ENCODE measurements at regions of chr10 and their contacts with region 1.

Region 1: GRCh38 chr10:122435212-122435827 is 19.1 kb upstream of the ARMS2 start:
- DNase-seq: peak; percentile 64
- H3K4me3 ChIP-seq: no peak overlapping the region
- H3K27ac ChIP-seq: no peak overlapping the region
- H3K4me1 ChIP-seq: no peaks in the 10 kb centered on the region
- H3K27me3 ChIP-seq: no peaks in the 10 kb centered on the region
- CTCF ChIP-seq: peak; percentile 72

Region 2: DNA sequence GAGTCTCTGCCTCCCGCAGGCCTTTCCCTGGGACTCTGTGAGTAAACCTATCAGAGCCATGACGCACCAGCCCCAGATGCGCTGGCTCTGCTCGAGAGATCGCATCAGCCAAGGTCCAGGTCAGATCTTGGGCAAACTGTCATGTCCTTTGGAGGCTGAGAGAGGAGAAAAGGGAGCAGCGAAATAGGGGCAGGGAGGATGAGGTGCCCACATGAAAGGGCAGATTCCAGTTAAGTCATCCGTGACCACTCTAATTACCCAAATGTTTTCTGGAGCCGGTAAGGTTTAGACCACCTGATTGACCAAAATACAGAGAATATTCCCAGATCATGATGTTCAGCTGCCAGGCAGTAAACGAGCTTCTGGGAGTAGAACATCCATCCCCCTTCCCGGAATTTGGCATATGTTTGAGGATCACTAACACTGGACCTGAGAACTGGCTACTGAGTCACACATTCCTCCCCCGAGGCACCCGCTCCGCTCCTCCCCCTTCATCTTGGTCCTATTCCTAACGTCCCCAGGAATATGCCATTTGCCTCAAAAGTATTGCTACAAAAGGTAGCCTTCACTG is 925.0 kb before region 1 on chr10:
- CTCF ChIA-PET with region 1: no interaction called
- POLR2A ChIA-PET with region 1: no interaction called
- intact Hi-C with region 1: no loop called
- DNase-seq: no peak
- H3K4me3 ChIP-seq: no peak overlapping the region
- H3K27ac ChIP-seq: no peak overlapping the region
- H3K4me1 ChIP-seq: no peaks in the 10 kb centered on the region
- H3K27me3 ChIP-seq: peaks cover 12% of the 10 kb centered on the region
- CTCF ChIP-seq: no peak

Region 3: GRCh38 chr10:122298598-122299301 is 136.6 kb before region 1 on chr10:
- CTCF ChIA-PET with region 1: interaction called, 15 read pairs
- POLR2A ChIA-PET with region 1: no interaction called
- intact Hi-C with region 1: loop called (anchors 1 kb)
- DNase-seq: peak; percentile 79
- H3K4me3 ChIP-seq: no peak overlapping the region
- H3K27ac ChIP-seq: no peak overlapping the region
- H3K4me1 ChIP-seq: no peaks in the 10 kb centered on the region
- H3K27me3 ChIP-seq: no peaks in the 10 kb centered on the region
- CTCF ChIP-seq: peak; percentile 86

Region 4: GRCh38 chr10:122342293-122343134 is 92.8 kb before region 1 on chr10:
- CTCF ChIA-PET with region 1: interaction called, 3 read pairs
- POLR2A ChIA-PET with region 1: no interaction called
- intact Hi-C with region 1: loop called (anchors 2 kb)
- DNase-seq: peak; percentile 60
- H3K4me3 ChIP-seq: no peak overlapping the region
- H3K27ac ChIP-seq: no peak overlapping the region
- H3K4me1 ChIP-seq: no peaks in the 10 kb centered on the region
- H3K27me3 ChIP-seq: no peaks in the 10 kb centered on the region
- CTCF ChIP-seq: peak; percentile 70